ENCODE measurements at regions of chr1 and their contacts with region 1.

Region 1: GRCh38 chr1:42958488-42959319 is at the start of gene SLC2A1:
- DNase-seq: peak; percentile 97
- ATAC-seq: peak; percentile 89
- H3K4me3 ChIP-seq: peak within 1 kb of the TSS; percentile 76 to 93 (median 87)
- H3K4me3 Mint-ChIP-seq: peak within 1 kb of the TSS; percentile 97
- H3K27ac ChIP-seq: peak within 1 kb of the TSS; percentile 59 to 86
- H3K27ac Mint-ChIP-seq: peak within 1 kb of the TSS; percentile 99
- H3K4me1 ChIP-seq: peaks cover 64 to 85% of the 10 kb centered on the region in 2 donors
- H3K4me1 Mint-ChIP-seq: peaks cover 73% of the 10 kb centered on the region
- H3K27me3 ChIP-seq: no peaks in the 10 kb centered on the region
- H3K27me3 Mint-ChIP-seq: no peaks in the 10 kb centered on the region
- CTCF ChIP-seq: no peak
- total RNA-seq, gene SLC2A1: 240 and 241 TPM in 2 replicates

Region 2: GRCh38 chr1:42816585-42817434 is 141.9 kb before region 1 on chr1 and contains the starts of genes ERMAP and SVBP:
- CTCF ChIA-PET with region 1: no interaction called
- POLR2A ChIA-PET with region 1: no interaction called
- intact Hi-C with region 1: loop called (anchors 2 kb)
- DNase-seq: peak; percentile 97
- ATAC-seq: peak; percentile 86
- H3K4me3 ChIP-seq: peak within 1 kb of the TSS; percentile 57 to 82 (median 77)
- H3K4me3 Mint-ChIP-seq: peak within 1 kb of the TSS; percentile 89
- H3K27ac ChIP-seq: peak within 1 kb of the TSS; percentile 75 to 82
- H3K27ac Mint-ChIP-seq: peak within 1 kb of the TSS; percentile 92
- H3K4me1 ChIP-seq: peaks cover 13% of the 10 kb centered on the region in 2 donors
- H3K4me1 Mint-ChIP-seq: peaks cover 20% of the 10 kb centered on the region
- H3K27me3 ChIP-seq: no peaks in the 10 kb centered on the region
- H3K27me3 Mint-ChIP-seq: no peaks in the 10 kb centered on the region
- CTCF ChIP-seq: no peak
- total RNA-seq, gene ERMAP: 13.1 and 13.5 TPM in 2 replicates
- total RNA-seq, gene SVBP: 21.9 and 23.2 TPM in 2 replicates

Region 3: GRCh38 chr1:42846257-42847110 is 112.2 kb before region 1 on chr1 and contains the start of gene ZNF691:
- CTCF ChIA-PET with region 1: no interaction called
- POLR2A ChIA-PET with region 1: interaction called, 3 read pairs
- intact Hi-C with region 1: loop called (anchors 1 kb)
- DNase-seq: peak; percentile 93
- ATAC-seq: peak; percentile 98
- H3K4me3 ChIP-seq: peak within 1 kb of the TSS; percentile 80 to 92 (median 90)
- H3K4me3 Mint-ChIP-seq: peak within 1 kb of the TSS; percentile 95
- H3K27ac ChIP-seq: peak within 1 kb of the TSS; percentile 41 to 76
- H3K27ac Mint-ChIP-seq: peak within 1 kb of the TSS; percentile 91
- H3K4me1 ChIP-seq: peaks cover 17 to 24% of the 10 kb centered on the region in 2 donors
- H3K4me1 Mint-ChIP-seq: peaks cover 46% of the 10 kb centered on the region
- H3K27me3 ChIP-seq: no peaks in the 10 kb centered on the region
- H3K27me3 Mint-ChIP-seq: no peaks in the 10 kb centered on the region
- CTCF ChIP-seq: peak; percentile 16
- total RNA-seq, gene ZNF691: 17.1 and 18.4 TPM in 2 replicates

Region 4: GRCh38 chr1:42931108-42931539 is 27.6 kb before region 1 on chr1:
- CTCF ChIA-PET with region 1: interaction called, 121 read pairs
- POLR2A ChIA-PET with region 1: interaction called, 209 read pairs
- intact Hi-C with region 1: loop called (anchors 1 kb)
- DNase-seq: peak; percentile 80
- ATAC-seq: no peak
- H3K4me3 ChIP-seq: peak overlapping the region; percentile 2 to 42 (median 26)
- H3K4me3 Mint-ChIP-seq: peak overlapping the region; percentile 86
- H3K27ac ChIP-seq: peak overlapping the region; percentile 84 to 97
- H3K27ac Mint-ChIP-seq: peak overlapping the region; percentile 97
- H3K4me1 ChIP-seq: peaks cover 54 to 66% of the 10 kb centered on the region in 2 donors
- H3K4me1 Mint-ChIP-seq: peaks cover 80% of the 10 kb centered on the region
- H3K27me3 ChIP-seq: no peaks in the 10 kb centered on the region
- H3K27me3 Mint-ChIP-seq: no peaks in the 10 kb centered on the region
- CTCF ChIP-seq: peak; percentile 69

Region 5: DNA sequence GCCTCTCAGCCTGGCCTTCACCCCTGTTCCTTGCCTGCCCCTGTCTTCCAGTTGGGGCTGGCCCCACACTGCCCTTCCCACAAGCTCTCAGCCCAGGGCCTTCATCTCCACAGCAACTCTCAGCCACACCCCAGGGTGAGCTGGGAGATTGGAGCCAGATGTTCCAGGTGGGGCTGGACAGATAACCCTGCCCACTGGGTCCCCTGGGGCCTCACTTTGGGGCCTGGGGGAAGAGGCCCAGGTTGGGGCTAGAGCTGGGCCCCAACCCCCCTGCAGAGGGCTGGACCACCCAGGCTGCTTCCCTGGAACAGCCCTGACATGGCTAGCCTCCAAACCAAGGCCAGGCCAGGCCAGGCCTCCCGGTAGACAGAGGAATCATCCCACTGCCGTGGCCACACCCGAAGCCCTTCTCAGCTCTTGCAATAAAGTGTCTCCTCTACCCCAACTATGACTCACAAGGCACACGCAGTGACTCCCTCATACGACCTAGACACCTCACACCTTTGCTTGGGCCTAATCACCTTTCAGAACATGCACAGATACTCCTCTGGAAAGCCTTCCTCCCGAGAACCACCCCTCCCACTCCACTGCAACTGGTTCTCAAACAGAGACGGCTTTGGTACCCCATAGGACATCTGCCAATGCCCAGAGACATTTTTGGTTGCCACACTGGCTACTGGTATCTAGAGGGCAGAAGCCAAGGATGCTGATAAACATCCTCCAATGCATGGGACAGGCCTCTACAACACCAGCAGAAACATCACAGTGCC is 22.2 kb before region 1 on chr1:
- CTCF ChIA-PET with region 1: interaction called, 121 read pairs
- POLR2A ChIA-PET with region 1: interaction called, 179 read pairs
- intact Hi-C with region 1: loop called (anchors 1 kb)
- DNase-seq: no peak
- ATAC-seq: no peak
- H3K4me3 ChIP-seq: no peak overlapping the region
- H3K4me3 Mint-ChIP-seq: peak overlapping the region; percentile 61
- H3K27ac ChIP-seq: peak overlapping the region; percentile 87 to 97
- H3K27ac Mint-ChIP-seq: peak overlapping the region; percentile 97
- H3K4me1 ChIP-seq: peaks cover 96 to 100% of the 10 kb centered on the region in 2 donors
- H3K4me1 Mint-ChIP-seq: peaks cover 98% of the 10 kb centered on the region
- H3K27me3 ChIP-seq: no peaks in the 10 kb centered on the region
- H3K27me3 Mint-ChIP-seq: no peaks in the 10 kb centered on the region
- CTCF ChIP-seq: no peak

Region 6: GRCh38 chr1:42941640-42942330 is 16.9 kb before region 1 on chr1:
- CTCF ChIA-PET with region 1: interaction called, 121 read pairs
- POLR2A ChIA-PET with region 1: interaction called, 179 read pairs
- intact Hi-C with region 1: loop called (anchors 2 kb)
- DNase-seq: peak; percentile 13
- ATAC-seq: no peak
- H3K4me3 ChIP-seq: no peak overlapping the region
- H3K4me3 Mint-ChIP-seq: no peak overlapping the region
- H3K27ac ChIP-seq: peak overlapping the region; percentile 66 to 76
- H3K27ac Mint-ChIP-seq: peak overlapping the region; percentile 92
- H3K4me1 ChIP-seq: peaks cover 98 to 100% of the 10 kb centered on the region in 2 donors
- H3K4me1 Mint-ChIP-seq: peaks cover 96% of the 10 kb centered on the region
- H3K27me3 ChIP-seq: no peaks in the 10 kb centered on the region
- H3K27me3 Mint-ChIP-seq: no peaks in the 10 kb centered on the region
- CTCF ChIP-seq: no peak

Region 7: GRCh38 chr1:43184995-43185394 is 226.3 kb after region 1 on chr1:
- CTCF ChIA-PET with region 1: no interaction called
- POLR2A ChIA-PET with region 1: no interaction called
- intact Hi-C with region 1: no loop called
- DNase-seq: no peak
- ATAC-seq: no peak
- H3K4me3 ChIP-seq: no peak overlapping the region
- H3K4me3 Mint-ChIP-seq: no peak overlapping the region
- H3K27ac ChIP-seq: no peak overlapping the region
- H3K27ac Mint-ChIP-seq: no peak overlapping the region
- H3K4me1 ChIP-seq: no peaks in the 10 kb centered on the region
- H3K4me1 Mint-ChIP-seq: no peaks in the 10 kb centered on the region
- H3K27me3 ChIP-seq: no peaks in the 10 kb centered on the region
- H3K27me3 Mint-ChIP-seq: peaks cover 18% of the 10 kb centered on the region
- CTCF ChIP-seq: no peak

Measured in B cell (primary cell).